Gastrocnemius medialis (tissue), 4 donors: ENCODE measurements at regions of chr7 and their contacts with region 1.

Region 1: GRCh38 chr7:37201003-37201875 is 247.4 kb downstream of the ELMO1 start:
- DNase-seq: peak; percentile 76 to 79
- ATAC-seq: peak; percentile 94 to 97
- H3K4me3 ChIP-seq: no peak overlapping the region
- H3K27ac ChIP-seq: peak overlapping the region; percentile 48 to 80 (median 65)
- H3K4me1 ChIP-seq: peaks cover 17 to 18% of the 10 kb centered on the region in 2 donors
- H3K27me3 ChIP-seq: no peaks in the 10 kb centered on the region
- CTCF ChIP-seq: peak; percentile 65 to 83 (median 73)
- POLR2A ChIP-seq: no peak

Region 2: DNA sequence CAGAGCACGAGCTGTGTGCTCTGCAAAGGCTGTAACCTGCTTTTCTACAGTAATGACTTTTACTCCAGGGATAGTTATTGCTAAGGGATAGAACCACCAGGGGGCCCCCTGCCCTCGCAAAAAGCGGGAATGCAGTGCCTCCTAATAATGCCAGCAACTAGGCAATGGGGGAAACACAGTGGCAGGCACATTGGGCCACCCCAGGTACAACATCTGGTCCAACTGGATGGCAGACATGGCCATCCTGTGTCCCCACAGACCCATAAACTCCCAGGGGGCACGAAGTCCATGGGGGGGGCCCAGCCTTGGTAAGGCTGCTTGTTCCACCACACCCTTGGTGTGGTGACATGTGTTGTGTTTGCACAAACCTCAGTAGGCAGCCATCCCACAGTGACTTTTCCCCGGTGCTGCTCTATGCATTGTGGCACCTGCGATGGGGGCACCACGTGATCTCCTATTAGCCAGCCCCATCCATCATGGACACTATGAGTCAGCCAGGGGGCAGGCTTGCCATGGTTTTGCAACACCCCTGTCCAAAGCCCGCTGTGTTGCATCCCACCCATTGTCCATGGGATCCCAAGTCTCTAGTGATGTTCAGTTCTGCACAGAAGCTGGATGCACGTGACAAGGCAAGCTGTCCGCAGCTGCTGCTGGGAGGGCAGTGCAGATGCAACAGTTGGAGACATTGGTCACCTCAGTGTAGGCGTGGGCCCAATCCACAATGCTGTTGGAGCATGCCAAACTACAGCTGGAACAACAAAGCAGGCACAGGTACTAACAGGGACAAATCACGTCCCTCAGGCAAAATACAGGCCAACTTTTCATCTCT is 727.6 kb before region 1 on chr7:
- in situ Hi-C with region 1: loop called in 1 of 4 experiments (anchors 25 kb)
- intact Hi-C with region 1: no loop called
- DNase-seq: no peak
- ATAC-seq: no peak
- H3K4me3 ChIP-seq: no peak overlapping the region
- H3K27ac ChIP-seq: no peak overlapping the region
- H3K4me1 ChIP-seq: no peaks in the 10 kb centered on the region
- H3K27me3 ChIP-seq: no peaks in the 10 kb centered on the region
- CTCF ChIP-seq: peak in 1 of 5 experiments; percentile 19
- POLR2A ChIP-seq: no peak

Region 3: DNA sequence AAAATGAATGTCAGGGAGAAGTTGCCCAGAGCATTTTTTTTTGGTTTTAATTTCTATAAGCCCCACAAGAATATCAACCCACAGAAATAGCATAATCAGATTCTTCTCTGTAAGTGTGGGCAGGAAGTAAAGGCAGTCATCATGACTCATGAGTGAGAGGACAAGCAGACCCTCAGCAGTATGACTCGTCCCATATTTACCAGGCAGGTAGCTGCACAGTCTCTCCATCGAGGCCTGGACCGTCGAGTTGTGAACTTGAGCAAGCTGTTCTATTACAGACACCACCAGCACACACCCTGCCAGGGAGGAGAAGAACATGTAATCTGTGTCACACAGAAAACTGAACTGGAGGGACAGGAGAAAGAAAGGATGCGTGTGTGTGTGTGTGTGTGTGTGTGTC is 514.7 kb before region 1 on chr7:
- in situ Hi-C with region 1: loop called in 1 of 4 experiments (anchors 25 kb)
- intact Hi-C with region 1: no loop called
- DNase-seq: no peak
- ATAC-seq: no peak
- H3K4me3 ChIP-seq: no peak overlapping the region
- H3K27ac ChIP-seq: no peak overlapping the region
- H3K4me1 ChIP-seq: no peaks in the 10 kb centered on the region
- H3K27me3 ChIP-seq: no peaks in the 10 kb centered on the region
- CTCF ChIP-seq: no peak
- POLR2A ChIP-seq: no peak

Region 4: DNA sequence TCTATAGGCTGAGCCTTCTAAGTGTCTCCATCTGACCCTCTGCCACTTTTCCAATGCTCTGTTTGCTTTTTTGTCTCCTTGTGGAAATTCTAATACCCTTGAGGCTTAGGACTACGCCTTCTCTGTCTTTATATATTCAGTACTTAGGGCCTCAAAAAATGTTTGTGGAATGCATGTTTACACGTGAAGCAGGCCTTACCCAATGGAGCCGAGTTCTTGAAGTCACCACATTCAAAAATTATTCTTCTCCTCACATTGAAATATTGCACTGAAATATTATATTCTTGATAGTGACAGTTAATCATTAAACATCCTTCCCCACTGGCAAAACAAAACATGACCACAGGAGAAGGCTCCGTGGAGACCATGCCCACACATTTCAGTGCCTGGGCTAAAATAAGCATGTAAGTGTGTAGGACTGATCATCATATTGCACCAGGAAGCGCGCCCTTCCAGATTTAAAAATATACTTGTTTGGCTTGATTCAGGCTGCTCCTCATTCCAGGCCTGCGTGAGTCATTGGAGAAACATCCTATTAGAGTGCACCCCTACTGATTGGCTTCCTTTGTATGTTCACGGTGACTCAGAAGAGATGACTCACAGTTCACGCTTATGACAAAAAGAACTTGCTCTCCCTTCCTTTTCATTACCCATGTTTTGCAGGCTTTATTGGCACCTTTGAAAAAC is 169.5 kb before region 1 on chr7:
- in situ Hi-C with region 1: no loop called
- intact Hi-C with region 1: loop called (anchors 5 kb)
- DNase-seq: peak; percentile 70 to 78
- ATAC-seq: peak; percentile 99 to 100
- H3K4me3 ChIP-seq: no peak overlapping the region
- H3K27ac ChIP-seq: peak overlapping the region; percentile 58 to 77 (median 70)
- H3K4me1 ChIP-seq: peaks cover 19 to 22% of the 10 kb centered on the region in 2 donors
- H3K27me3 ChIP-seq: no peaks in the 10 kb centered on the region
- CTCF ChIP-seq: no peak
- POLR2A ChIP-seq: peak in 1 of 2 donors; percentile 15

Region 5: DNA sequence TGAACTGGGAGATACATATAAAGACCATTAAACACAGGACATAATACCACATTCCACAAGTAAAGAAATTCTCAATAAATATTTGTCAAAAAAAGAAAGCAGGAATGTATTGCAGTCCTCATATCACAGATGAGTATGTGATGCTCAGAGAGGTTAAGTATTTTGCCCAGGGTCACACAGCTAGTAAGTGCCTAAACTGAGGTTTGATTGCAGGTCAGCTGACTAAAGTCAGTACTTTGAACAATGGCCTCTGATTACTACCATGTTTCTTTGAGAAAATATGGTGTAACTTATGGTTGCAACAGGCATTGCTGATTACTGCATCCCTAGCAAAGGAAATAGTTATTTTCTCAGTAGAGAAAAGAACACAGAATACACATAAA is 19.7 kb before region 1 on chr7:
- in situ Hi-C with region 1: no loop called
- intact Hi-C with region 1: no loop called
- DNase-seq: no peak
- ATAC-seq: no peak
- H3K4me3 ChIP-seq: no peak overlapping the region
- H3K27ac ChIP-seq: no peak overlapping the region
- H3K4me1 ChIP-seq: no peaks in the 10 kb centered on the region
- H3K27me3 ChIP-seq: no peaks in the 10 kb centered on the region
- CTCF ChIP-seq: no peak
- POLR2A ChIP-seq: no peak

Region 6: GRCh38 chr7:37234928-37235327 is 33.7 kb after region 1 on chr7:
- in situ Hi-C with region 1: no loop called
- intact Hi-C with region 1: no loop called
- DNase-seq: no peak
- ATAC-seq: no peak
- H3K4me3 ChIP-seq: no peak overlapping the region
- H3K27ac ChIP-seq: no peak overlapping the region
- H3K4me1 ChIP-seq: peaks cover 0 to 12% of the 10 kb centered on the region in 2 donors
- H3K27me3 ChIP-seq: no peaks in the 10 kb centered on the region
- CTCF ChIP-seq: peak in 2 of 5 experiments; percentile 31 to 49
- POLR2A ChIP-seq: no peak

Region 7: DNA sequence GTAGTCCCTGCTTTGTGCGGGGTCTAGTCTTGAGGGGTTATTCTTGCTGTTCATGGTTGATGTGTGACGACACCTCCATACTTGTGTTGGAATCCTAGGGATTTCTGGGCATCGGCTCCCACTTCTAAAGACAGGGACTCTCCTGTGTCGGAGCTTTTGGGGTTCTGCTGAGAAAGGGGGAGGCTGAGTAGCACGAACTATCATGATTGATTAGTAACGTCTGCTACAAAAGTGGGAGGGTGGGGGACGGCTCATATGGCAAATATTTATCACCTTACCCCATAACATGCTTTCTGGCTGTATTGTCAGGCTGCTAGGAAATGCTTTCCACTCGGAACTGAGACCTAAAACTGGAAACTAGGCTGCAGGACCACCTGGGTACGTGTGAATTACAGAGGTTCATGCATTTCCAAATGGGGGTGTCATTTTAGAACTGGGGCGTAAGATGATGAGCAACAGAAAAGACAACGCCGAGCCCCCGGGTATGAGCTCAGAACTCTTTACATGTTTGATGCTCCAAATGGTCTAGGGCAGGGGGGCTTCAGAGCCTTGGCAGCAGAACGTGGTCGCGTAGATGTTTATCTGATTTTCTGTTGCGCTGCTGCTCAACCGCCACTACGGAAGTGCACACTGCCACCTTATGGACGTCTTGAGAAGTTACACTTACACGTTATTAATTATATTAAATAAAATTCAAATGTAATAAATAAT is 632.0 kb after region 1 on chr7:
- in situ Hi-C with region 1: loop called in 3 of 4 experiments (anchors 10 to 25 kb)
- intact Hi-C with region 1: loop called (anchors 10 kb)
- DNase-seq: peak in 1 of 2 donors; percentile 5
- ATAC-seq: no peak
- H3K4me3 ChIP-seq: peak overlapping the region; percentile 23 to 41 (median 37)
- H3K27ac ChIP-seq: no peak overlapping the region
- H3K4me1 ChIP-seq: no peaks in the 10 kb centered on the region
- H3K27me3 ChIP-seq: no peaks in the 10 kb centered on the region
- CTCF ChIP-seq: peak in 4 of 5 experiments; percentile 26 to 68 (median 54)
- POLR2A ChIP-seq: no peak